ENCODE measurements at regions of chr11 and their contacts with region 1.

Region 1: DNA sequence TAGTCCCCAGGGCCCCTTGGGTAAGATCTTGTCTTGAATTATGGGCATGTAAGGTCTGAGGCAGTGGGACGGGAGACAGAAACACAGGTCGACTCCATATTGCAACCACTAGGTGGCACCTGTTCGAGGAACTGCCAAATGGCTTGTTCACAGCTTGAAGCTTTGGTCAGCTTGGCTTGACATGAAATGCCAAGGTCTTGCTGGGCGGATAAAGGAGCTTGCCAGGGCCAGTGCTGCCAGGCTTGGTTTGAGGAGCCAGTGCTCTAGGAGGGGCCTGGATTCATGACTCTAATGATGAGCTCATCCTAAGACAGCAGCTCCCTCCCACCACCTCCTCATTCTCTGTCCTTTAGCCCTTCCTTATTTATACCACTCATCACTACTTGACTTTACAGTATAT is 11.9 kb upstream of the NRIP3 start:
- DNase-seq: peak in 4 of 5 donors; percentile 48 to 61 (median 56)
- ATAC-seq: peak; percentile 41 to 83 (median 64)
- H3K4me3 ChIP-seq: no peak overlapping the region
- H3K27ac ChIP-seq: no peak overlapping the region
- H3K4me1 ChIP-seq: peaks cover 0 to 28% (median 17%) of the 10 kb centered on the region in 12 donors
- H3K27me3 ChIP-seq: no peaks in the 10 kb centered on the region
- CTCF ChIP-seq: peak; percentile 55 to 83 (median 74)
- POLR2A ChIP-seq: no peak

Region 2: DNA sequence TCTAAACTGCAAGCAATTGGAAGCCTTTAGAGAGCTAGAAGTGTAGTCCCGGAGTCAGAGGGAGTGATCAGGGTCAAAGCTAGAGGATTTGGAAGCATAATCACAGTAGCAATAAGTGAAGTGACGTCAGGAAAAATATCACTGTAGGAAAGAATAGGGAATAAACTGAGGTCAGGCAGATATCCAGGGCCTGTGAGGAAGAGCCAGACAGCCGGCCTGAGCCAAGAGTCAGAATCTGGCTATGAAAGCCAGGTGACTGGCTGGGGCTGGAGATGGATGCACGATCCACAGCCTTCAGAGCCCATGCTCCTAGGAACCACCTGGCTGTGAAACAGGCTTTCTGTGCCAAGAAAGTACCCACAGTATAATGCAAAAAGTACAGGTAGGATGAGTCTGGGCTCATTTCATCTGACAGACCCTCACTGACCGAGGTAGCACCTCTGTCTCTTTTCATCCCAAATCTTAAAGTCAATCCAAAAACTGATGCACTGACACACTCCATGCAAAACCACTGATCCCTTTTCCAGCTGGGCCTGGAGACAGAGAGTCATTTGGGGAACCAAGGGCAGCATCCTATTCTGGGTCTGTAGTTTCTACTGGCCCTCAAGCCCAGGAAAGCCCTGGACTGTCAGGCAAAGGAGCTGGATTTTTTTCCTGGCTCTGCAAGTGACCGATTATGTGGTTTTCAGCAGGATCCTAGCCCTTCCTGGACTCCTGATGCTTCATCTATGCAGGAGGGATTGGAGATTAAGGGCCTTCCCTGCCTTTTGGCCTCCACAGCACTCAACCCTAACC is 354.5 kb before region 1 on chr11:
- intact Hi-C with region 1: no loop called
- DNase-seq: no peak
- ATAC-seq: no peak
- H3K4me3 ChIP-seq: no peak overlapping the region
- H3K27ac ChIP-seq: no peak overlapping the region
- H3K4me1 ChIP-seq: peaks cover 0 to 7% (median 0%) of the 10 kb centered on the region in 12 donors
- H3K27me3 ChIP-seq: no peaks in the 10 kb centered on the region
- CTCF ChIP-seq: no peak
- POLR2A ChIP-seq: no peak

Region 3: DNA sequence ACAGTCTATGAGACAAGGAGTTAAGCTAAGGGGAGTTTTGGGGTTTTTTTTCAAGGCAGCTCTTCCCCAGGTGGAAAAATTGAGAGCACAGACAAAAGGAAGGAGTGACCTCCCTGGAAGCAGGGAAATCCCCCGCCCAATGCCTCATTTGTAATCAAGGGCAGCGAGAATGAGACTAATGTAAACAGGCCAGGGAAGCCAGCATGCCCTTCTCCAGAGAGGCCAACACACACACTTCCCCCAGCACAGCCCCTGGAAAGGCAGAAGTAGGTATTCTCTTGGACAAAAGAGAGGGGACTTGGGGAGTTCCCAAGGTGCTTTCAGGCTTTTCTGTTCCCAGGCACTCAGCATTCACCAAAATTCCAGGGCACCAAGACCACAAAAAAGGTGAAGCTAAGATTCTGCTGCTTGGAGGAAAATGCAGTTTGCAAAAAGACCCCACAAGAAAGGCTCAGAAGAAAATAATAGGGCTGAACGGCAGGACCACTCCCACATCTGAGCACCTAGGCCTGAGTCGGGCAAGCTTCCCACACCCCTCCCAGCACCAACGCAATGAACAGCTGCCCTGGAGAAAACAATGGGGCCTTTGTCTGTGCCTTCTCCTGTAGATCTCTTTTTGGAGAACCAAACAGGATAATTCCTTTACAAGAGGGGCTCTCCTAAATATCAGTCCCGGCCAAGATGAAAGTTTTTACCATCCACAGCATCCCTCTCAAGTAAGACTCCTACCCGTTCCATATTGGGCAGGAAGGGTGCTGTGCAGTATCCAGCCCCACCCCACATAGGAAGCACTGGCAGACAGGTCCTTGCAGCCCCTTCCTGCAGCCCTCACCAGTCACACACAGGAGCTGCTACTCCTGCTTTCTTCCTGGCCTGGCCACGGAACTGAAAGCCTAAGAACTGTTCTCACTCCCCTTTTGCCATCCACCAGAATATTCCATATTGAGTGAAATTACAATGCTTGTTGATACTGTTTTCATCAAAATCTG is 175.4 kb before region 1 on chr11:
- intact Hi-C with region 1: no loop called
- DNase-seq: peak in 3 of 5 donors; percentile 32 to 40 (median 37)
- ATAC-seq: peak in 3 of 4 donors; percentile 23 to 57 (median 48)
- H3K4me3 ChIP-seq: no peak overlapping the region
- H3K27ac ChIP-seq: peak overlapping the region in 11 of 12 donors; percentile 24 to 75 (median 59)
- H3K4me1 ChIP-seq: peaks cover 0 to 38% (median 29%) of the 10 kb centered on the region in 12 donors
- H3K27me3 ChIP-seq: no peaks in the 10 kb centered on the region
- CTCF ChIP-seq: no peak
- POLR2A ChIP-seq: no peak

Region 4: DNA sequence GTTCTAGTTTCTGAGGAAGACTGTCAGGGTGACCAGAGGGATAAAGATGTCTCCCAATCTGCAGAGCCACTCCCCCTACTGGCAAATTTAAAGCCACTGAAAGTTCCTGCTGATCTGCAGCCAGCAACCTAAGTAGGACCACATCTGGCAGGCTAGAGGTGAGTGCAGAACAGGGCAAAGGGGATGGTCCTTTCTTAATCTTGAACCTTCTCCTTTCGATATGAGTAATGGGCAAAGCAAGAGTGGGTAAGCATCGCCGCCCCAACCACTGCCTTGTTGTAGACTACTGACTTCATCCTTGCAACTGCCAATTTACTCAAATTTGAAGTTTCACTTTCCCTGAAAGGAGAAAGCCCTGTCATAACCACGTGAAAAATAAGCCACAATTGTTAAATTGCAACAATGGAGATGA is 45.0 kb after region 1 on chr11:
- intact Hi-C with region 1: loop called in 1 of 10 experiments (anchors 5 kb)
- DNase-seq: no peak
- ATAC-seq: no peak
- H3K4me3 ChIP-seq: no peak overlapping the region
- H3K27ac ChIP-seq: peak overlapping the region in 1 of 12 donors; percentile 4
- H3K4me1 ChIP-seq: peaks cover 0 to 12% (median 0%) of the 10 kb centered on the region in 12 donors
- H3K27me3 ChIP-seq: no peaks in the 10 kb centered on the region
- CTCF ChIP-seq: peak in 3 of 12 donors; percentile 11 to 18 (median 15)
- POLR2A ChIP-seq: no peak

Region 5: GRCh38 chr11:9137293-9138132 is 121.8 kb after region 1 on chr11:
- intact Hi-C with region 1: loop called (anchors 1 to 5 kb)
- DNase-seq: peak; percentile 67 to 82 (median 70)
- ATAC-seq: peak; percentile 84 to 92 (median 91)
- H3K4me3 ChIP-seq: no peak overlapping the region
- H3K27ac ChIP-seq: no peak overlapping the region
- H3K4me1 ChIP-seq: peaks cover 0 to 34% (median 12%) of the 10 kb centered on the region in 12 donors
- H3K27me3 ChIP-seq: no peaks in the 10 kb centered on the region
- CTCF ChIP-seq: peak; percentile 89 to 98 (median 92)
- POLR2A ChIP-seq: no peak

Region 6: DNA sequence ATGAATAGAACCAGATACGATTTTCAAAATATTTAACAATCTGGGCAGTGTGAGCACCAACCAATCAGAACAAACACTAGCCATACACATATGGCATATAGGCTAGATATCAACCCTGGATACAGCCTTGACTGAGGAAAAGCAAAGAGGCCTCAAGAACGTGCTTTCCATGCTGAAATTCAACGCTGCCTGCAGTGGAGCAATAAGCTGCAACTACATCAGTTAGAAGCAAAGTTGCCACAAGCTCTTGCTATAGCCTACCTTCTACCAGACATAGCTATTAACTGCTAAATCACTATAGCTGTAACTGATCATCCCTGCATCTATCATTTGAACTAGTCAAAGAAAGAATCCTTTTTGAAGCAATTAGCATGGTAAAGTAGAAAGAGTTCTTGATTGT is 207.0 kb after region 1 on chr11:
- intact Hi-C with region 1: no loop called
- DNase-seq: no peak
- ATAC-seq: no peak
- H3K4me3 ChIP-seq: no peak overlapping the region
- H3K27ac ChIP-seq: no peak overlapping the region
- H3K4me1 ChIP-seq: peaks cover 0 to 38% (median 9%) of the 10 kb centered on the region in 12 donors
- H3K27me3 ChIP-seq: no peaks in the 10 kb centered on the region
- CTCF ChIP-seq: no peak
- POLR2A ChIP-seq: no peak

Region 7: GRCh38 chr11:9748361-9748970 is 732.8 kb after region 1 on chr11:
- intact Hi-C with region 1: no loop called
- DNase-seq: peak in 4 of 5 donors; percentile 53 to 57 (median 56)
- ATAC-seq: peak; percentile 84 to 91 (median 88)
- H3K4me3 ChIP-seq: no peak overlapping the region
- H3K27ac ChIP-seq: peak overlapping the region in 2 of 12 donors; percentile 41 to 53
- H3K4me1 ChIP-seq: peaks cover 0 to 24% (median 9%) of the 10 kb centered on the region in 12 donors
- H3K27me3 ChIP-seq: no peaks in the 10 kb centered on the region
- CTCF ChIP-seq: peak; percentile 61 to 82 (median 71)
- POLR2A ChIP-seq: no peak